CD4-positive, alpha-beta memory T cell (primary cell): ENCODE measurements at regions of chr2 and their contacts with region 1.

Region 1: DNA sequence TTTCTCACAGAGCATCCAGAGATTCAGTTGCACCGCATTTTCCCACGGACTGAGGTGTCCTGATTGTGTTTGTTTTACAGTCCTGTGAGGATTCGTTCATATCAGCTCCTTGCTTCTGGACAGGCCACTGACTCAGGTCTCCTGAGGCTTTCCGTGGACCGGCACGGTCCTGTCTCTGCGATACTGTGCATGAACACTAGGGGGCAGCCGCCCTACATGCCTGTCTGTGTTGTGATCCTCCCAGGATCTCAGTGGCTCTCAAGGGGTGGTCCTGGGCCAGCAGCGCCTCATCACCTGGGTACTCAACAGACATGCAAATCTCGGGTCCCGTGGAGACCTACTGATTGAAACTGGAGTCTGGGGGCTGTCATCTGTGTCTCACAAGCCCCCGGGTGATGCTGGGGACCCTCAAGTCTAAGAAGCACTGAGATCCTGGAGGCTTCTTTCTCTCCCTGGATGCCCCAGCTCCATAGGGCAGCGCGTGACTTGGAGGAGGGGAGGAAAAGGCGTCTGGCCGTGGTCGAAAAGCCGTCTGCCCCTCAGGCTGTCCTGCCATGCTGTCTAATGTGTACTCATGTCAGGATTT is 28.9 kb downstream of the IL1R2 start:
- DNase-seq: peak; percentile 70 to 80 (median 72)
- H3K4me3 ChIP-seq: no peak overlapping the region
- H3K4me3 Mint-ChIP-seq: peak overlapping the region in 2 of 8 donors; percentile 24 to 31
- H3K27ac ChIP-seq: no peak overlapping the region
- H3K27ac Mint-ChIP-seq: no peak overlapping the region
- H3K4me1 ChIP-seq: no peaks in the 10 kb centered on the region
- H3K4me1 Mint-ChIP-seq: peaks cover 0 to 6% (median 3%) of the 10 kb centered on the region in 4 donors
- H3K27me3 ChIP-seq: no peaks in the 10 kb centered on the region
- H3K27me3 Mint-ChIP-seq: no peaks in the 10 kb centered on the region

Region 2: DNA sequence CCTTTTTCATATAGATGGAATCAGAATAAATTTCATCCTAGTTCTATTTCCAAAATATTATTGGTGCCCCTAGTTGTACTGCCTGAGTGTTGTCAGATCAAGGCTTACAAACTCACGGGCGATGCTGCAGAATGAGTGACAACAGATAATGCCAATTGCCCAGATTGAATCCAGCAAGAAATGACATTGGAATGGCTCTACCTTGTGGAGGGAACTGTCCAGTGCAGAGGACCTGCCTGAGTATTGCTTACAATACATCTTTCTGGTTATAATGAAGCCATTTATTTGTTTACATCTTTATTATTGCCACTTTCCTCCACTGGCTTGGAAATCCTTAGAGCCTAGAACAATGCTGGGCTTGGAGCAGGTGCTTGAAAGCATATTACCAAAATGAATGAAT is 36.8 kb before region 1 on chr2:
- CTCF ChIA-PET with region 1: no interaction called
- POLR2A ChIA-PET with region 1: no interaction called
- intact Hi-C with region 1: no loop called
- DNase-seq: no peak
- H3K4me3 ChIP-seq: no peak overlapping the region
- H3K4me3 Mint-ChIP-seq: no peak overlapping the region
- H3K27ac ChIP-seq: no peak overlapping the region
- H3K27ac Mint-ChIP-seq: peak overlapping the region in 1 of 7 donors; percentile 23
- H3K4me1 ChIP-seq: no peaks in the 10 kb centered on the region
- H3K4me1 Mint-ChIP-seq: peaks cover 0 to 6% (median 0%) of the 10 kb centered on the region in 4 donors
- H3K27me3 ChIP-seq: no peaks in the 10 kb centered on the region
- H3K27me3 Mint-ChIP-seq: peaks cover 2 to 4% of the 10 kb centered on the region in 2 donors

Region 3: GRCh38 chr2:102005989-102006885 is 14.5 kb before region 1 on chr2:
- CTCF ChIA-PET with region 1: interaction called, 35 read pairs
- POLR2A ChIA-PET with region 1: no interaction called
- intact Hi-C with region 1: no loop called
- DNase-seq: peak in 2 of 5 donors; percentile 22 to 28
- H3K4me3 ChIP-seq: no peak overlapping the region
- H3K4me3 Mint-ChIP-seq: peak overlapping the region in 3 of 8 donors; percentile 3 to 43 (median 4)
- H3K27ac ChIP-seq: no peak overlapping the region
- H3K27ac Mint-ChIP-seq: no peak overlapping the region
- H3K4me1 ChIP-seq: peaks cover 7% of the 10 kb centered on the region
- H3K4me1 Mint-ChIP-seq: peaks cover 3 to 8% (median 7%) of the 10 kb centered on the region in 4 donors
- H3K27me3 ChIP-seq: no peaks in the 10 kb centered on the region
- H3K27me3 Mint-ChIP-seq: peaks cover 3 to 4% of the 10 kb centered on the region in 2 donors

Region 4: GRCh38 chr2:102166189-102166845 is 145.6 kb after region 1 on chr2:
- CTCF ChIA-PET with region 1: interaction called, 19 read pairs
- POLR2A ChIA-PET with region 1: no interaction called
- intact Hi-C with region 1: no loop called
- DNase-seq: no peak
- H3K4me3 ChIP-seq: no peak overlapping the region
- H3K4me3 Mint-ChIP-seq: no peak overlapping the region
- H3K27ac ChIP-seq: no peak overlapping the region
- H3K27ac Mint-ChIP-seq: no peak overlapping the region
- H3K4me1 ChIP-seq: no peaks in the 10 kb centered on the region
- H3K4me1 Mint-ChIP-seq: no peaks in the 10 kb centered on the region
- H3K27me3 ChIP-seq: no peaks in the 10 kb centered on the region
- H3K27me3 Mint-ChIP-seq: no peaks in the 10 kb centered on the region

Region 5: GRCh38 chr2:102251042-102251848 is 230.6 kb after region 1 on chr2:
- CTCF ChIA-PET with region 1: interaction called, 13 read pairs
- POLR2A ChIA-PET with region 1: no interaction called
- intact Hi-C with region 1: no loop called
- DNase-seq: peak; percentile 50 to 58 (median 54)
- H3K4me3 ChIP-seq: peak overlapping the region; percentile 80 to 86
- H3K4me3 Mint-ChIP-seq: peak overlapping the region; percentile 90 to 99 (median 95)
- H3K27ac ChIP-seq: no peak overlapping the region
- H3K27ac Mint-ChIP-seq: peak overlapping the region; percentile 18 to 94 (median 78)
- H3K4me1 ChIP-seq: peaks cover 12% of the 10 kb centered on the region
- H3K4me1 Mint-ChIP-seq: peaks cover 14 to 39% (median 23%) of the 10 kb centered on the region in 4 donors
- H3K27me3 ChIP-seq: no peaks in the 10 kb centered on the region
- H3K27me3 Mint-ChIP-seq: peaks cover 0 to 2% of the 10 kb centered on the region in 2 donors

Region 6: GRCh38 chr2:102261467-102262135 is 240.9 kb after region 1 on chr2:
- CTCF ChIA-PET with region 1: no interaction called
- POLR2A ChIA-PET with region 1: no interaction called
- intact Hi-C with region 1: no loop called
- DNase-seq: no peak
- H3K4me3 ChIP-seq: no peak overlapping the region
- H3K4me3 Mint-ChIP-seq: no peak overlapping the region
- H3K27ac ChIP-seq: no peak overlapping the region
- H3K27ac Mint-ChIP-seq: no peak overlapping the region
- H3K4me1 ChIP-seq: peaks cover 37% of the 10 kb centered on the region
- H3K4me1 Mint-ChIP-seq: peaks cover 16 to 34% (median 23%) of the 10 kb centered on the region in 4 donors
- H3K27me3 ChIP-seq: no peaks in the 10 kb centered on the region
- H3K27me3 Mint-ChIP-seq: peaks cover 0 to 1% of the 10 kb centered on the region in 2 donors

Region 7: GRCh38 chr2:102449370-102449974 is 428.8 kb after region 1 on chr2:
- CTCF ChIA-PET with region 1: interaction called, 21 read pairs
- POLR2A ChIA-PET with region 1: no interaction called
- intact Hi-C with region 1: loop called (anchors 1 kb)
- DNase-seq: peak; percentile 44 to 63 (median 49)
- H3K4me3 ChIP-seq: no peak overlapping the region
- H3K4me3 Mint-ChIP-seq: no peak overlapping the region
- H3K27ac ChIP-seq: no peak overlapping the region
- H3K27ac Mint-ChIP-seq: no peak overlapping the region
- H3K4me1 ChIP-seq: no peaks in the 10 kb centered on the region
- H3K4me1 Mint-ChIP-seq: peaks cover 0 to 2% (median 0%) of the 10 kb centered on the region in 4 donors
- H3K27me3 ChIP-seq: no peaks in the 10 kb centered on the region
- H3K27me3 Mint-ChIP-seq: no peaks in the 10 kb centered on the region